Ovary (tissue), 10 donors: ENCODE measurements at regions of chr9 and their contacts with region 1.

Region 1: DNA sequence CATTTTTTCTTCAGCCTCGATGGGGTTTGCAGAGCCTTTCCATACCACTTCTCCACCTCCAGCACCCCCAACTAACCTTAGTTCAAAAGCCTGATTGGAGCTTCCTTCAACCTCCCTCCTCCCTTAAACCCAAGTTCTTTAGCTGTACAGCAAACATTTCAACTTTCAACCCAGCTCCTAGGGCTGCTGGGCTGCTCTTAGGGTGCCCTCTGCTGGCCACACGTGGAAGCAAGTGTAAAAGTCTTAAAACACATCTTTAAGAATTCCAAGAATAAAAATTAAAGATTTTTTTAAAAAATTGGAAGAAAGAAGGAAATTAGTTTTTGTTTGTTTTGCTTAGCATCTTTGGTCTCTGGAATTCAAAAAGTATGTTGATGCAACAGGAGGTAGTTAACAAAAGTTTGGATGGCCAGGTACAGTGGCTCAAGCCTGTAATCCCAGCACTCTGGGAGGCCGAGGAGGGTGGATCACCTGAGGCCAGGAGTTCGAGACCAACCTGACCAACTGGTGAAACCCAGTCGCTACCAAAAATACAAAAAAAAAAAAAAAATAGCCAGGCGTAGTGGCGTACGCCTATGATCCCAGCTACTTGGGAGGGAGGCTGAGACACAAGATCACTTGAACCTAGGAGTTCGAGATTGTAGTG is 15.5 kb upstream of the HSD17B3 start:
- DNase-seq: peak in 4 of 5 donors; percentile 33 to 75 (median 62)
- H3K4me3 ChIP-seq: no peak overlapping the region
- H3K27ac ChIP-seq: no peak overlapping the region
- H3K4me1 ChIP-seq: no peaks in the 10 kb centered on the region
- H3K27me3 ChIP-seq: no peaks in the 10 kb centered on the region
- CTCF ChIP-seq: peak; percentile 36 to 88 (median 77)
- EP300 ChIP-seq: no peak
- POLR2A ChIP-seq: no peak

Region 2: GRCh38 chr9:96232539-96233241 is 84.8 kb before region 1 on chr9:
- intact Hi-C with region 1: loop called in 2 of 4 experiments (anchors 5 kb)
- DNase-seq: peak; percentile 64 to 85 (median 82)
- H3K4me3 ChIP-seq: no peak overlapping the region
- H3K27ac ChIP-seq: peak overlapping the region in 1 of 2 donors; percentile 4
- H3K4me1 ChIP-seq: peaks cover 5% of the 10 kb centered on the region
- H3K27me3 ChIP-seq: no peaks in the 10 kb centered on the region
- CTCF ChIP-seq: peak; percentile 32 to 76 (median 71)
- EP300 ChIP-seq: no peak
- POLR2A ChIP-seq: no peak

Region 3: DNA sequence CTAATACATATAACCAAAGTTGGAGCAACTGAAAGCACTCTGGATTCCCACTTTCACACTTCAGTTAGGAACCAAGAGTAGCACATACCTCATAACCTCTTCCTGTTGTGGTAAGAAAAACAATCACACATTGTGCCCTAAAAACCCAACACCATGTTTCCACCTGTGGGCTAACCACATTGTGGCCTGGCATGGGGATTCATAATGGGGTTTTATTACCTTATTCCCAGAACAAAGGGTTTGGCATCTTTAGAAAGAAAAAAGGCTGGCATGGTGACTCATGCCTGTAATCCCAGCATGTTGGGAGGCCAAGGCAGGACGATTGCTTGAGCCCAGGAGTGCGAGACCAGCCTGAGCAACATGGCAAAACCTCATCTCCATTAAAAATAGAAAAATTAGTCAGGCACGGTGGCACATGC is 76.1 kb before region 1 on chr9:
- intact Hi-C with region 1: loop called in 1 of 4 experiments (anchors 10 kb)
- DNase-seq: no peak
- H3K4me3 ChIP-seq: no peak overlapping the region
- H3K27ac ChIP-seq: no peak overlapping the region
- H3K4me1 ChIP-seq: peaks cover 2% of the 10 kb centered on the region
- H3K27me3 ChIP-seq: no peaks in the 10 kb centered on the region
- CTCF ChIP-seq: no peak
- EP300 ChIP-seq: no peak
- POLR2A ChIP-seq: no peak